ENCODE measurements at regions of chr16 and their contacts with region 1.

Region 1: DNA sequence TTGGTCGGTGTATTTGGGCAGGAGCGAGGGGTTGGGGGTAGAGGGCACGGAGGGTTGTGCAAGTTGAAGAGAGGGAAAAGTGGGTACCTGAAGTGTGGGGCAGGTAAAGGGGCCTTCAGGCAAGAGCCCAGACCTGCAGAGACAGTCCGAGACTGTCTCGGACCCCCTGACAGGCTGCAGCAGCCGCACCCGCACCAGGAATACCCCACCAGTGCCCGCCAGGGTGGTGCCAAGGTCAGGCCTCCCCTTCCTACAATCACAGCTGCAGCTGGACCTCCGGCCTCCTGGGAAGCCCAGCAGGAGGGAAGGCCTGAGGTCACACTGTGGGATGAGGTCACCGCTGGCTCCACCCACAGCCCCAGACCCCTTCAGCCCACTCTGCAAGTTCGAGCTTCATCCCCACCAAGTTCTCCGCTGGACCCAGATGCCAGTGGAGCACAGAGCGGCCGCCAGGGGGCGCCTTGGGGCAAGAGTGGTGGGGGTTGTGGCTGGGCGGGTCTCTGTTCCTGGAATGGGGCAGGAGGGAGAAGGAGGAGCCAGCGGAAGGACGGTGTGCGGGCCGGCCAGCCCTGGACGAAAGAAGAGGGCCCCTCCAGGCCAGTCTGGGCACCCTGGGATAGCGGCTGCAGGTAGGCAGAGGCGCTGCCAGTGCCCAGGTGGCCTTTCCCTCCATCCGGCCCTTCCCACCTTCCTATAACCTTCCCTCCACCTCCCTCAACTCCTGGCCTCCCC is at the start of gene HSD3B7:
- DNase-seq: peak; percentile 59 to 95
- H3K4me3 ChIP-seq: peak within 1 kb of the TSS; percentile 45; the same call in 1 of the 2 replicates
- H3K27ac ChIP-seq: no peak within 1 kb of the TSS
- H3K4me1 ChIP-seq: no peaks in the 10 kb centered on the region; the same call in 1 of the 2 replicates
- H3K27me3 ChIP-seq: no peaks in the 10 kb centered on the region
- CTCF ChIP-seq: peak; percentile 97
- total RNA-seq, gene HSD3B7: 34.8 and 44.2 TPM in 2 replicates

Region 2: GRCh38 chr16:30961384-30961783 is 23.5 kb before region 1 on chr16:
- CTCF ChIA-PET with region 1: no interaction called
- POLR2A ChIA-PET with region 1: no interaction called
- intact Hi-C with region 1: no loop called
- DNase-seq: peak in 1 of 2 experiments; percentile 21
- H3K4me3 ChIP-seq: no peak overlapping the region
- H3K27ac ChIP-seq: no peak overlapping the region
- H3K4me1 ChIP-seq: peaks cover 9% of the 10 kb centered on the region
- H3K27me3 ChIP-seq: no peaks in the 10 kb centered on the region
- CTCF ChIP-seq: no peak

Region 3: DNA sequence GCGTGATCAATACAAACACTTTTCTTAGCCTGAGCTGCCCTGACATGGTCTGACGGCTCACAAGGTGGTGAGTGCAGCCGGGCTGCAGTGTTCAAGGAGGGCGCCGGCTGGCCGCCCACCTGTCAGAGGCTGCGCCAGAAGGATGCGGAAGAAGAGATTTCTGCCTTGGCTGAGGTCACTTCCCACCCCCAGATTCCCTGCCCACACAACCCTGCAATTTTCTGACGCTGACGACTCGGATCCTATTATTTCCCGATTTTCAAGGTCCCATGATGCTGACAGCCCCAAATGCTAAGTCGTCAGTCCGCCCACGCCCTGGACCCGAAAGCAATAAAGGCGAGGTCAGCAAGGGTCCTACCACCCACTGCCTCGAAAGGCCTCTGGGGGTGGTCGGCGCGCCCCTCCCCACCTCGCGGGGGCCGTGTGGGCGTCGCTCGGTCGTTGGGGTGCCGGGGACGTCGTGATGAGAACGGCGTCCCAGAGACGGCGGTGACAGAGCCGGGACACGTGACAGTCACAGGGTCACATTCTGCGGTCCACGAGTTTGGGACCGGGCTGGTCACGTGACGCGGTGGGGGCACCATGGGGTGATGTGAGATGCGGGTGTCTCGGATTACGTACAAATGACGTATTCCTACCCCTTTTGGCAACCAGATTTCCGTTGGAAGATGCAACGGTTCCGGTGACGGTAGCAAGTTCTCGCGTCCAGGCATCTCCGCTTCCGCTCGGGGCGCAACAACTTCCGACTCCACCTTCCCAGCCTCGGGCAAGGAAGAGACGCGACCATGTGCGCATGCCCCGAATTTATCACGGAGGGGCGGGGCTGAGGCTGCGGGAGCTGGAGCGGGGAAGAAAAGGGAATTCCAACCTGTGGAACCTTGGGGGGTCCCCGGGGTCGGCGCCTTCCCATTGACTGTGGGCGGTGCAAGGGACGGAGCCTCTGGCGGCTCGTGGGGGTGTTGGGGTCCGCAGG is 48.2 kb after region 1 on chr16 and contains the start of gene STX4:
- CTCF ChIA-PET with region 1: no interaction called
- POLR2A ChIA-PET with region 1: no interaction called
- intact Hi-C with region 1: loop called (anchors 1 kb)
- DNase-seq: peak; percentile 93 to 99
- H3K4me3 ChIP-seq: peak within 1 kb of the TSS; percentile 87
- H3K27ac ChIP-seq: peak within 1 kb of the TSS; percentile 62
- H3K4me1 ChIP-seq: peaks cover 12% of the 10 kb centered on the region
- H3K27me3 ChIP-seq: no peaks in the 10 kb centered on the region
- CTCF ChIP-seq: no peak
- total RNA-seq, gene STX4: 85.8 and 100 TPM in 2 replicates

Region 4: DNA sequence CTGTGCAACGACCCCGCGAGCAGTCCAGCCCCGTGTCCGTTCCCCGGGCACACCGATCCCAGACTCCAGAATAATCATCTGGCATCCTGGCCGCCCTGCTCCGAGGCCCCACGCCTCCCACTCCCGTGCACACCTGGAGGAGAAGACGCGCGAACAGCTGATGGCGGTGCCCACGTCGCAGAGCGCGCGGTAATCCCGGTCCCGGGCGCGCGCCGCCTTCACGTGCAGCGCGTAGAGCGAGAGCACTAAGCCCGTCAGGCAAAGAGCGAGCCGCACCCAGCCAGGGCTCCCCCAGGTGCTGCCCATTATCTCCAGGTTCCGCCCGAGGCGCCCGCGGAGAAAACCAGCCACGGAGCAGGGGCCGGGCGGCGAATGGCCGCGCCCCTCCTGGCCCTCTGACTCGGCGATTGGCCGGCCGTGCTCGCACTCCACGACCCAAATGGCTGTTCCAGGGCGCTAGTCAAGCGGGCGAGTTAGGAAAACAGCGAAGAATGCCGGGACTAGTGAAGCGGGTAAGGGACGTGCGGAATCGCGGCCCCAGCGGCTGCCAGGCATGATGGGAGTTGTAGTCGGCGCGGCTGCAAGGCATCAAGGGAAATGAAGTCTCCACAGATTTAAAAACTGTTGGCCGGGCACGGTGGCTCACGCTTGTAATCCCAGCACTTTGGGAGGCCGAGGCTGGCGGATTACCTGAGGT is 109.7 kb after region 1 on chr16 and contains the start of gene VKORC1:
- CTCF ChIA-PET with region 1: interaction called, 5 read pairs
- POLR2A ChIA-PET with region 1: no interaction called
- intact Hi-C with region 1: loop called (anchors 1 kb)
- DNase-seq: peak; percentile 97 to 99
- H3K4me3 ChIP-seq: peak within 1 kb of the TSS; percentile 71
- H3K27ac ChIP-seq: peak within 1 kb of the TSS; percentile 35
- H3K4me1 ChIP-seq: 0 out of 2 replicates have a peak, but pooled peaks cover 3% of the 10 kb centered on the region
- H3K27me3 ChIP-seq: no peaks in the 10 kb centered on the region
- CTCF ChIP-seq: no peak
- total RNA-seq, gene VKORC1: 46.0 and 59.9 TPM in 2 replicates

Region 5: GRCh38 chr16:31298967-31299366 is 314.1 kb after region 1 on chr16:
- CTCF ChIA-PET with region 1: no interaction called
- POLR2A ChIA-PET with region 1: interaction called, 6 read pairs
- intact Hi-C with region 1: loop called (anchors 1 kb)
- DNase-seq: no peak
- H3K4me3 ChIP-seq: no peak overlapping the region
- H3K27ac ChIP-seq: no peak overlapping the region
- H3K4me1 ChIP-seq: no peaks in the 10 kb centered on the region
- H3K27me3 ChIP-seq: no peaks in the 10 kb centered on the region
- CTCF ChIP-seq: peak; percentile 61

Region 6: GRCh38 chr16:31382485-31383161 is 397.8 kb after region 1 on chr16:
- CTCF ChIA-PET with region 1: no interaction called
- POLR2A ChIA-PET with region 1: no interaction called
- intact Hi-C with region 1: loop called (anchors 5 kb)
- DNase-seq: peak in 1 of 2 experiments; percentile 77
- H3K4me3 ChIP-seq: no peak overlapping the region
- H3K27ac ChIP-seq: no peak overlapping the region
- H3K4me1 ChIP-seq: peaks cover 29% of the 10 kb centered on the region
- H3K27me3 ChIP-seq: no peaks in the 10 kb centered on the region
- CTCF ChIP-seq: peak; percentile 86

Region 7: DNA sequence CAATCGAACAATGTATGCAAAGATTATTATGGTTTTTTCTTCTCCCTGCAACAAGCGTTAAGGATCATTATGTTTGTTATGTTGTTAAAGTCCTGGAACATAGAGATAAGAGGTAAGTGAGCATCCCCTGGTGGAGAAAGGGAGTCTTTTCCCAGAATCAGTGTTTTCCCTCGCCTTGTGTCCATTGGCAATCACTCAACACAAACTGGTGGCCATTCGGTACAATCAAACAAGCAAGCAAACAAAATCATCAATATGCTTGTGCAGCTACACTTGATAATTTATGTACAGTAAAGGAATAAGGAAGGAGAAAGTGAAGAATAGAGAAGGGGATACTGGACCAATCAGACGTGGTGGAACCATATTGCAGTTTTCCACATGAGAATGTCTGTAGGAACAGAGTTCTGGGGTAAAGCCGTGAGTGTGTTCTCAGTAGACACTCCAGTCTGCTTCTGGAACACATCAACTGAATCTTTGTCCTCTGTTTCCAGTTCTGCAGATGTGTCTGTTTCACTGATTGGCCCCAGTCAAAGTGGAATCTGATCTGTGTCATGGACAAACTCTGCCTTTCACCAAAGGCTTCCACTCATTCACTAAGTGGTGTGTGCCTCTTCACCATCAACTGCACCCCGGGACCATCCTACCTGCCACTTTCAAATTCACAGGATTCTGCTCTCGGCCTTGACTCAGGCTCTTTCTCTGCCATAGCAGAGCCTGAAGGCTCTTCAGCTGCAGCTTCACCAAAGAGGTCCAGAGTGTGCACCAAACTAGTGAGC is 712.3 kb after region 1 on chr16:
- CTCF ChIA-PET with region 1: no interaction called
- POLR2A ChIA-PET with region 1: interaction called, 3 read pairs
- intact Hi-C with region 1: loop called (anchors 1 kb)
- DNase-seq: no peak
- H3K4me3 ChIP-seq: no peak overlapping the region
- H3K27ac ChIP-seq: no peak overlapping the region
- H3K4me1 ChIP-seq: peaks cover 10% of the 10 kb centered on the region
- H3K27me3 ChIP-seq: no peaks in the 10 kb centered on the region
- CTCF ChIP-seq: peak; percentile 78